HCT116 (cell line): ENCODE measurements at regions of chr10 and their contacts with region 1.

Region 1: DNA sequence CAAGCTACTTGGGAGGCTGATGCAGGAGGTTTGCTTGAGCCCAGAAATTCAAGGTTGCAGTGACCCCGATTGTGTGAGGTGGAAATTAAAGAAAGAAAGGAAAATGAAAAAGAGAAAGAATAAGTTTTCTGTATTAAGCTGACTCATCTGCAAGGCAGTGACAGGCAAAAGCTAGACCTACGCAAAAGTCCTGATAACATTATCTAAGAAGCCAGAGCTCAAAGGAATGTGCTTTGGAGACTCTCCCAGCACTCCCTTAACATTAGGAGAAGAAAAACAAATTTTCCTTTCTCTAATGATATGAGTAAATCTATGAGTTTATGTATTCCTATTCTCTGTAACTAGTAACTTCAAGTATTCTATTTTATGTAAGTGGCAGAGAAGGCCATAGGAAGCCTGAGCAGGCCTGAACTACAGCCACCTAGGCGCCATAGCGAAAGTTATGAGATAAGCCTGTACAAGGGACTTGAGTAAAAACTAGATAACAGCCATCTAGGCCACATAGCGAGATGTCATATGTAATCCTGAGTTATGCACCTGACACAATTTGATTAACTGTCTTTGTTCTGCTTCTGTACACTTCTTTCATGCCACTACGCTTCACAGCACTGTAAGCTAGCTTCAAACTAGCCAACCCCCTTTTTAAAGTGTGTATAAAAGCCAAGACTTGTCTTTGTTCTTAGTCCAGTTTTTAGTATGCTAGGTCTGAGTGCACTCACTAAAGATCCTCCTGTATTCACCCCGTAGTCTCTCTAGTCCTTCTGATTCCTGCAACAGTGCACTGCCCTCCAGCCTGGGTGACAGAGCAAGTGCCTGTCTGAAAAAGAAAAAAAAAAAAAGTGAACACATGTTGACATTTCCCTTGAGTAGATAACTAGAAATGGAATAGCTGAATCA is 9.4 kb upstream of the ZWINT start:
- DNase-seq: peak; percentile 21
- ATAC-seq: no peak
- H3K4me3 ChIP-seq: no peak overlapping the region
- H3K27ac ChIP-seq: no peak overlapping the region
- H3K4me1 ChIP-seq: no peaks in the 10 kb centered on the region
- H3K27me3 ChIP-seq: no peaks in the 10 kb centered on the region
- CTCF ChIP-seq: no peak
- POLR2A ChIP-seq: no peak
- RAD21 ChIP-seq: no peak

Region 2: DNA sequence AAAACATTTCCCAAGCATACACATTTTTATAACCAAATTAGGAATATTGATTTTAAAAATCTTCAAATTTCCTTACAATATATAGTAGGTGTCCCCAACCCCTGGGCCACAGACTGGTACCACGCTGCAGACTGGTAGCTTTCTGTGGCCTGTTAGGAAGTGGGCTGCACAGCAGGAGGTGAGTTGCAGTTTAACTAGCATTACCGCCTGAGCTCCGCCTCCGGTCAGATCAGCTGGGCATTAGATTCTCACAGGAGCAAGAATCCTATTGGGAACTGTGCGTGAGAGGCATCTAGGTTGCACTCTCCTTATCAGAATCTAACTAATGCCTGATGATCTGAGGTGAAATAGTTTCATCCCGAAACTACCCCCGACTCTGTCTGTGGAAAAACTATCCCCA is 71.5 kb before region 1 on chr10:
- CTCF ChIA-PET with region 1: no interaction called
- POLR2A ChIA-PET with region 1: no interaction called
- RAD21 ChIA-PET with region 1: no interaction called
- intact Hi-C with region 1: no loop called
- DNase-seq: no peak
- ATAC-seq: no peak
- H3K4me3 ChIP-seq: no peak overlapping the region
- H3K27ac ChIP-seq: no peak overlapping the region
- H3K4me1 ChIP-seq: no peaks in the 10 kb centered on the region
- H3K27me3 ChIP-seq: no peaks in the 10 kb centered on the region
- CTCF ChIP-seq: no peak
- POLR2A ChIP-seq: no peak
- RAD21 ChIP-seq: no peak

Region 3: GRCh38 chr10:56383806-56384205 is 13.3 kb after region 1 on chr10:
- CTCF ChIA-PET with region 1: no interaction called
- POLR2A ChIA-PET with region 1: no interaction called
- RAD21 ChIA-PET with region 1: no interaction called
- intact Hi-C with region 1: loop called (anchors 1 kb)
- DNase-seq: no peak
- ATAC-seq: no peak
- H3K4me3 ChIP-seq: no peak overlapping the region
- H3K27ac ChIP-seq: no peak overlapping the region
- H3K4me1 ChIP-seq: no peaks in the 10 kb centered on the region
- H3K27me3 ChIP-seq: no peaks in the 10 kb centered on the region
- CTCF ChIP-seq: no peak
- POLR2A ChIP-seq: no peak
- RAD21 ChIP-seq: no peak